ENCODE measurements at regions of chr18 and their contacts with region 1.

Region 1: GRCh38 chr18:23416298-23416697 is 36.8 kb upstream of the RIOK3 start:
- DNase-seq: no peak
- ATAC-seq: peak in 1 of 2 donors; percentile 27

Region 2: GRCh38 chr18:22933206-22933957 is 482.9 kb before region 1 on chr18 and contains the start of gene RBBP8:
- intact Hi-C with region 1: loop called in 1 of 2 experiments (anchors 10 kb)
- DNase-seq: peak; percentile 90
- ATAC-seq: peak; percentile 97 to 98
- total RNA-seq, gene RBBP8: 7.9 to 9.2 TPM

Region 3: DNA sequence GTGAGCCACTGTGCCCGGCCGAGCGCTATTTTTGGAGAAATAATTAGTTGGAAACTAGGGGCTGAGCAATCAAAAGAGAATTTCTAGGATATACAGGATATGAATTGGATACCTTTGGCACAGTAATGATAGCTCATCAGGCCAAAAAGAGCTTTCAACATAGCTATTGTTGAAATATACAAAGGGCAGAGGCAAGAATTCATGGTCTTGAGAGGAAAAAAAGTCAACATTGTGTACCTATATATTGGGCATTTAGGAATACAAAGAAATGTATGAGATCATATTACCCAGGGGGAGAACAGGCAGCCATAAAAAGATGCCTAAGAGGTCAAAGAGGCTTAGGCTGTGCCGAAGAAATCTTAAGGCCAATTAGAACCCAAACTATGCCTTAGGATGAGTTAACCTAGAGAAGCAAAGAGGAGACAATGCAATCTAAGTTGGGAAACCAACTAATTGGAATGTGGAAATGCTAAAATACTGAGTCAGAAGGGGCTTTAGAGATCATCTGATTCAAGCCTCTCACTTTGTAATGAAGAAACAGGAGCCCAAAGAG is 384.2 kb before region 1 on chr18:
- intact Hi-C with region 1: loop called in 1 of 2 experiments (anchors 5 kb)
- DNase-seq: no peak
- ATAC-seq: peak in 1 of 2 donors; percentile 33

Region 4: DNA sequence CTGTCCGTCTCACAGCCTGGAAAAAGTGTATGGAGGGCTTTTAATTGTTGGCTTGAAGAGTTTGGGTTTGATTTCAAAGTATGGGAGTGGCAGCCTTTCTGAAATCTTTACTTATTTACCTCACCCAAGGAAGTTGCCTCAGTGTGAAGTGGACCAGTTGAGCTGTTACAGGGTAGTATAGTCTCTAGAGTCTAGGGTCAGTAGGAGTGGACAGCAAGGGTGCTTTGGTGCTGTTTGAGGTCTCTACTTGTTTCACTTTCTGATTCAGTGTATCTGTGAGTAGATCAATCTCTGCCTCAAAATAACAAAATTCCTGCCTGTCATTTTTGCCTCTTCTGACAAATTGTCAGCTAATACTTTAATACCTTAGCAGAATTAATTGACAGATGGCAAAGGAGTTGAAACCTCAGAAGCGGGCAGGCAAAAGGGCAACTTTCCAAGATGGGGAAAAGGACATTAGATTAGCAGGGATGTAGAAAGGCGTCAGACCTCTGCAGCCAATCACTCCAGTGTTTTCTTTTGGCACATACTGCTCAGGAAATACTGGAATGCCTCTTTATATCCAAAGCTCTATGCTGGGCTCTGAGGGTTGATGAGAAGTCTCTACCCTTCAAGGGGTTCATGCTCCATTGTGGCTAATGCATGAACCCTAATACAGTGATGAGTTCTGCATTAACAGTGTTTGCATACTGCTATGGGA is 42.7 kb after region 1 on chr18:
- intact Hi-C with region 1: no loop called
- DNase-seq: no peak
- ATAC-seq: no peak